GM12878 (cell line): ENCODE measurements at regions of chr11 and their contacts with region 1.

Region 1: GRCh38 chr11:105719073-105719822 is 109.4 kb downstream of the GRIA4 start:
- DNase-seq: peak; percentile 35
- ATAC-seq: peak; percentile 98
- H3K4me3 ChIP-seq: no peak overlapping the region
- H3K27ac ChIP-seq: no peak overlapping the region
- H3K4me1 ChIP-seq: no peaks in the 10 kb centered on the region
- H3K27me3 ChIP-seq: no peaks in the 10 kb centered on the region
- CTCF ChIP-seq: no peak
- EP300 ChIP-seq: no peak
- POLR2A ChIP-seq: no peak
- RAD21 ChIP-seq: no peak

Region 2: GRCh38 chr11:105740164-105740903 is 21.1 kb after region 1 on chr11:
- CTCF ChIA-PET with region 1: interaction called, 5 read pairs
- POLR2A ChIA-PET with region 1: interaction called, 3 read pairs
- RAD21 ChIA-PET with region 1: no interaction called
- SMC1A ChIA-PET with region 1: interaction called, 10 read pairs
- in situ Hi-C with region 1: no loop called
- intact Hi-C with region 1: no loop called
- DNase-seq: peak; percentile 7
- ATAC-seq: peak; percentile 89
- H3K4me3 ChIP-seq: no peak overlapping the region
- H3K27ac ChIP-seq: no peak overlapping the region
- H3K4me1 ChIP-seq: peaks cover 3% of the 10 kb centered on the region; the same call in 1 of the 2 replicates
- H3K27me3 ChIP-seq: no peaks in the 10 kb centered on the region
- CTCF ChIP-seq: no peak
- EP300 ChIP-seq: 0 out of 4 replicates have a peak, but pooled peaks of 1 of the 2 experiments have one; percentile 18
- POLR2A ChIP-seq: no peak
- RAD21 ChIP-seq: no peak

Region 3: DNA sequence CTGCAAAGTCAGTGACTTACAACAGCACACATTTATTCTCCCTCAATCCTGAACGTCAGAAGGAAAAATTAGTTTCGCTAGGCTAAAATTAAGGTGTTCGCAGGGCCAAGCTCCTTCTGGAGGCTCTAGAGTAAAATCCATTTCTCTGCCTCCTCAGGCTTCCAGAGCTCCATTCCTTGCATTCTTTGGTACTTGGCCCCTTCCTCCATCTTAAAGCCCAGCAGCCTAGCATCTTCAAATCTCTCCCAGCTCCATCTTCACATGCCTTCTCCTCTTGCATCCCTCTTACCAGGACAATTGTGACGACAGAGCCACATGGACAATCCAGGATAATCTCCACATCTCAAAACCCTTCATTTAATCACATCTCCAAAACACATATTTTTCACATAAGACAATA is 55.7 kb after region 1 on chr11:
- CTCF ChIA-PET with region 1: interaction called, 3 read pairs
- POLR2A ChIA-PET with region 1: no interaction called
- RAD21 ChIA-PET with region 1: no interaction called
- SMC1A ChIA-PET with region 1: no interaction called
- in situ Hi-C with region 1: no loop called
- intact Hi-C with region 1: loop called (anchors 5 kb)
- DNase-seq: no peak
- ATAC-seq: no peak
- H3K4me3 ChIP-seq: no peak overlapping the region
- H3K27ac ChIP-seq: no peak overlapping the region
- H3K4me1 ChIP-seq: no peaks in the 10 kb centered on the region
- H3K27me3 ChIP-seq: no peaks in the 10 kb centered on the region; a peak in 1 of 4 replicates
- CTCF ChIP-seq: no peak
- EP300 ChIP-seq: no peak
- POLR2A ChIP-seq: no peak
- RAD21 ChIP-seq: no peak